ENCODE measurements at regions of chr14 and their contacts with region 1.

Region 1: DNA sequence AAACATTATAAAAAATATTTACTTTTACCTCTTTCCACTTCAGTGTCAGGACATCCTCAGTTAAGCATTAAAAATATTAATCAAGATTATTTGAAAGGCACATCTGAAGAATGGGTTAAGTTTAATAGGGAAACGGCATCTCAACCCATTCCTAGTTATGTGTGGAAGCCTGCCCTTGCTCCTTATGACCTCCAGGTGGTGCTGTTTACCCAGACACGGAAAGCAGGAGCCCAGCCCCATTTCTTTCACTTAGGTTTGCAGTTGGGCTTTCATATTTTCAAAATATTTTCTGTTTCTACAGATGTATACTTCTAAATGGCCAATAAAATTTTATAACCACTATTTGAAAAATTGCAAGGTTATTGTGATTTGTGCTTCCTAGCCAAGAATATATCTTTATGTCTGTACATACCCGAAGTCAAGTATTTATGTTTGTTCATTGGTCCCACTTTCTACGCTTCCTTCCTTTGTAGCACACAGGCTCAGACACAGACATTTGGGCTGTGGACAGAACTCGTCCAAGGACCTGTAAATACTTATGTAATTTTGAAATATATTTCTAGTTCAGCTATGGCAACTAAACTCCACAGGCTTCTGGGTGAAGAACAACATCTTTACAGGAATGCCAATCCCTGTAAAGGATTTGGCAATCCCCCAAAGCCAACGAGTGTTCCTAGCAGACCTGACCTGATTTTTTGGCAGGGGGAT is 247.1 kb downstream of the AKAP6 start:
- DNase-seq: peak; percentile 50
- H3K4me3 Mint-ChIP-seq: no peak overlapping the region
- H3K27ac Mint-ChIP-seq: no peak overlapping the region
- H3K4me1 Mint-ChIP-seq: no peaks in the 10 kb centered on the region
- H3K27me3 Mint-ChIP-seq: peaks cover 5% of the 10 kb centered on the region

Region 2: GRCh38 chr14:32702562-32702961 is 126.3 kb after region 1 on chr14:
- CTCF ChIA-PET with region 1: no interaction called
- intact Hi-C with region 1: loop called (anchors 5 kb)
- DNase-seq: peak; percentile 59
- H3K4me3 Mint-ChIP-seq: no peak overlapping the region
- H3K27ac Mint-ChIP-seq: peak overlapping the region; percentile 77
- H3K4me1 Mint-ChIP-seq: peaks cover 8% of the 10 kb centered on the region
- H3K27me3 Mint-ChIP-seq: no peaks in the 10 kb centered on the region

Region 3: DNA sequence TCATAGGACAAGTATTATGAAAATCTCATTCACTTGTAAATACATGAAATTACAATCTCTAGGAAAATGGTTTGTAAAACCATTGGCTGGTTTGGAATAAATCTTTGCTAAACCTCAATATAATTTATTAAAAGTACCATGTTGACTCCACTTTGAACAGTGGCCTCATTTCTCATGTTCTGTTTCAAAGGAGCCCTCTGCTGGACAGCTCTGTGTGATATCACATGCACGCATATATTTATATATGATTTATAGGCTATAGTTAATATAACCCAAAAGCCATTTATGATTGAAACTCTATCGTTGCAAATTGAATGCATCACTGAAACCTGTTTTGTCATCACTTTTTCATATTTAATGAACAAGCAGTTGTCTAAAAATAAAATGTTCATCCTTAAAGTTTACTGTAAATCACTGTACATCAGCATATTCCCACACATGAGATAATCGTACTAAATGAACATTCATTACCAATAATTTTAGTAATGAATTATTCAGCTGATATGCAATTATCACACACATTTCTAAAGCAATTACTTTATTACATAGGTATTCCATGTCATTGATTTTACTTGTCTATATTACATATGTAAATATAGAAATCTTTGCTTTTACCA is 856.3 kb after region 1 on chr14:
- CTCF ChIA-PET with region 1: interaction called, 3 read pairs
- intact Hi-C with region 1: loop called (anchors 1 kb)
- DNase-seq: peak; percentile 18
- H3K4me3 Mint-ChIP-seq: no peak overlapping the region
- H3K27ac Mint-ChIP-seq: no peak overlapping the region
- H3K4me1 Mint-ChIP-seq: peaks cover 5% of the 10 kb centered on the region
- H3K27me3 Mint-ChIP-seq: no peaks in the 10 kb centered on the region

Region 4: GRCh38 chr14:34227834-34228649 is 1651.8 kb after region 1 on chr14:
- CTCF ChIA-PET with region 1: no interaction called
- intact Hi-C with region 1: loop called (anchors 2 kb)
- DNase-seq: peak; percentile 71
- H3K4me3 Mint-ChIP-seq: no peak overlapping the region
- H3K27ac Mint-ChIP-seq: no peak overlapping the region
- H3K4me1 Mint-ChIP-seq: peaks cover 3% of the 10 kb centered on the region
- H3K27me3 Mint-ChIP-seq: peaks cover 4% of the 10 kb centered on the region

Region 5: GRCh38 chr14:34322940-34323418 is 1746.7 kb after region 1 on chr14:
- CTCF ChIA-PET with region 1: interaction called, 3 read pairs
- intact Hi-C with region 1: loop called (anchors 2 kb)
- DNase-seq: peak; percentile 84
- H3K4me3 Mint-ChIP-seq: no peak overlapping the region
- H3K27ac Mint-ChIP-seq: no peak overlapping the region
- H3K4me1 Mint-ChIP-seq: no peaks in the 10 kb centered on the region
- H3K27me3 Mint-ChIP-seq: peaks cover 3% of the 10 kb centered on the region